Motor neuron (in vitro differentiated cells): ENCODE measurements at regions of chrX and their contacts with region 1.

Region 1: DNA sequence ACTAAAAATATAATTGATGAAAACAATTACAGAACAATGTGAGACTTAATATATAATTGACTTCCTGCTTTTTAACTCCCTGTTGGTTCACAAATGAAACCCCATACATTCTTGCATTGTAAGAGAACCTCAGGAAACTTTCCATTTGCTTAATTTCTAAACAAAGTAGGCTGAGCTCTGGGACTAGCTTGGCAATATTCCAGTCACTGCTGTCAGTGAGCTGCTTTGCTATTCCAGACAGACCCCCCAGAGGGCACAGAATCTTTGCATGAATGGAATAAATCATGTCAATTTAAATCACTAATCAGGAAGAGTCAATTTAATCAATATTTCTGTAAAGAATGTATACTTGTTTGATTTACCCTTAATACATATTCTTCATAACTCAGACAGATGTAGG is 110.6 kb downstream of the NEXMIF start:
- ATAC-seq: no peak
- H3K4me3 ChIP-seq: no peak overlapping the region
- H3K27ac ChIP-seq: no peak overlapping the region
- H3K4me1 ChIP-seq: no peaks in the 10 kb centered on the region

Region 2: DNA sequence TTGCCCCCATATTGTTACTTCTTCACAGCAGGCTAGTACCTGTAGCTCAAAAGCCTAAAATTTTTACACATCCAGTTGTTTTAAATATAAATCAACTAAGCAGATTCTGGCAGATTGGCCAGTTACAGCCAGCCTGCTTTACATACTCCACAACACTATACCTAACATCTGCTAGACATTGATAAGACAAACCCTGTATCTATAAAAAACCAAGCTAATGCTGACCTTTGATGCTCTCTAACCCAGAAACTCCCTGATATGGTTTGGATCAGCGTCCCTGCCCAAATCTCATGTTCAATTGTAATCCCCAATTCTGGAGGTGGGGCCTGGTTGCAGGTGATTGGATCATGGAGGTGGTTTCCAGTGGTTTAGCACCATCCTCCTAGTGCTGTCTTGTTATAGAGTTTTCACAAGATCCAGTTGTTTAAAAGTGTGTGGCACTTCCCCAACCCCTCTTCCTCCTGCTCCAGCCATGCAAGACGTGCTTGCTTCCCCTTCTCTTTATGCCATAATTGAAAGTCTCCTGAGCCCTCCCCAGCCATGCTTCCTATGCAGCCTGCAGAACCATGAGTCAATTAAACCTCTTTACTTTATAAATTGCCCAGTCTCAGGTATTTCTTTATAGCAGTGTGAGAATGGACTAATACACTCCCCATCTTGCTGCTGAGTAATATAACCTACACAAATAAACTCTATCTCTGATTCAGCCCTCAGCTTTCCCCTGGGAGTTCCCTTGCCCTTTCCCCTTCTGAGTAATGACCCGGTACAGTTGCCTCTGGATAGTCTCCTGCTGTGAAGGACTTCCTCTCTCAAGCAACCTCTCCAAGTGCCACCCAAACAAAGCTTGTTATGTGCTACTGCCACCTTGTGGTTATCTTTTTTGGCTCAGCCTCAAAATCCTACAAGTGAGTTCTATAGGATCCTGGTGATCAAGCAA is 471.1 kb before region 1 on chrX:
- in situ Hi-C with region 1: no loop called
- ATAC-seq: peak; percentile 64 to 97 (median 88)
- H3K4me3 ChIP-seq: no peak overlapping the region
- H3K27ac ChIP-seq: no peak overlapping the region
- H3K4me1 ChIP-seq: peaks cover 2 to 3% of the 10 kb centered on the region in 2 donors

Region 3: DNA sequence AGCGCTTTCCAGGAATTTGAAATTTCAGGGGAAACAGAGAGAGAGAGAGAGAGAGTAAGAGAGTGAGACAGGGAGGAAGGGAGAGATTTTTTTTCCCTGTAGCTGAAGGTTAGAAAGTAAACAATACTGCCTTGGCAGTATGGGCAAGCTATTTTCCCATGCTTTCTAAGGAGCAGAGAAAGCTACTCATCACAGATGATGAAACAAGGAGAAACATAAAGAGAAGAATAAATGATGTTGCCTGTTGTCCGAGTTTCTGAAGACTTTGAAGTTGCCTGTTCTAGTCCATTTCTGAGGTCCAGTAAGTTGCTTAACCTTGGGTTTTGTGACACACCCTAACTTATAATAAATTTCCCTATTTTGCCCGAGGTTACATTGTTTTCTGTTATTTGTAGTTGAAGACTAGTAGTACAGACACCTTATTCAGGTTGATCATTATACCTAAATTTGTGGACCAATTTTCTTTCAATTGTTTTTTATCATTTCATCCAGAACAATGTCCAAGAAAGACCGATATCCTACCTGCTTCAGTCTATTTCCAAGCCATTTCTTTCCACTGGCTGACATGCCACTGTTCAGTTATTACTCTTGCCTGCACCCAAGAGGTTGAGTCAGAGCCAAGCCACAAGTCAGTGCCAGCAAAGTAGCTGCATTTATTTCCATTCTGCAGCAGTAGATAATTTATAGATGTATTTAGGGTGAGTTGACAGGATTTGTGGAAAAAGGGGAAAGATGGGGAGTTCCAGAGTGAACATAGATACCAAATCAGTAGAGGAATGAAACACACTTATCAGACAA is 443.1 kb before region 1 on chrX:
- in situ Hi-C with region 1: no loop called
- ATAC-seq: peak in 3 of 8 experiments; percentile 22 to 56 (median 26)
- H3K4me3 ChIP-seq: no peak overlapping the region
- H3K27ac ChIP-seq: no peak overlapping the region
- H3K4me1 ChIP-seq: no peaks in the 10 kb centered on the region

Region 4: DNA sequence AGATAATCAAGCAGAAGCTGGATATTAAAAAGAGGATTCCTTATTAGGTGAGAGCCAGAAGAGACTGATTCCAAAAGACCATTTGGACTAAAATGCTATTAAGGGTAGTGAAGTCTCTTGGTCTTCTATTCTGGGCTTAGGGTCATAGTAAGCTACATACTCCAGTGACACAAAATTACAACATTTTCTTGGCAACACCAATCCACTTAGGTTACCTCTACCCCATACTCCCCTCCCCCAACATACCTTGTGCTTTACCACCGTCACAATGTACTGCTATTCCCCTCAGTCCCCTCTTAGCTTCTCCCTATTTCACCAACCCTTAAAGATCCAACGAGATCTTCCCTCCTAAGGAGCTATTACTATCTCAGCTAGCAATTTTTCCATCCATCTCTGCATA is 211.6 kb before region 1 on chrX:
- in situ Hi-C with region 1: no loop called
- ATAC-seq: peak in 1 of 8 experiments; percentile 7
- H3K4me3 ChIP-seq: no peak overlapping the region
- H3K27ac ChIP-seq: no peak overlapping the region
- H3K4me1 ChIP-seq: no peaks in the 10 kb centered on the region

Region 5: GRCh38 chrX:74704101-74704500 is 110.6 kb before region 1 on chrX:
- in situ Hi-C with region 1: no loop called
- ATAC-seq: no peak
- H3K4me3 ChIP-seq: no peak overlapping the region
- H3K27ac ChIP-seq: no peak overlapping the region
- H3K4me1 ChIP-seq: no peaks in the 10 kb centered on the region

Region 6: GRCh38 chrX:74924449-74925225 is 110.0 kb after region 1 on chrX:
- in situ Hi-C with region 1: loop called in 1 of 9 experiments (anchors 25 kb)
- ATAC-seq: peak; percentile 42 to 81 (median 79)
- H3K4me3 ChIP-seq: peak overlapping the region; percentile 64 to 95 (median 71)
- H3K27ac ChIP-seq: peak overlapping the region; percentile 86 to 94
- H3K4me1 ChIP-seq: peaks cover 2 to 8% of the 10 kb centered on the region in 2 donors